A673 (cell line): ENCODE measurements at regions of chr2 and their contacts with region 1.

Region 1: GRCh38 chr2:194264586-194264985 is 1392.4 kb upstream of the SLC39A10 start:
- DNase-seq: no peak
- H3K4me3 ChIP-seq: no peak overlapping the region
- H3K27ac ChIP-seq: no peak overlapping the region
- H3K4me1 ChIP-seq: no peaks in the 10 kb centered on the region
- H3K27me3 ChIP-seq: no peaks in the 10 kb centered on the region
- CTCF ChIP-seq: no peak

Region 2: GRCh38 chr2:194289712-194290346 is 25.2 kb after region 1 on chr2:
- CTCF ChIA-PET with region 1: no interaction called
- POLR2A ChIA-PET with region 1: no interaction called
- intact Hi-C with region 1: loop called (anchors 2 kb)
- DNase-seq: no peak
- H3K4me3 ChIP-seq: no peak overlapping the region
- H3K27ac ChIP-seq: no peak overlapping the region
- H3K4me1 ChIP-seq: no peaks in the 10 kb centered on the region
- H3K27me3 ChIP-seq: no peaks in the 10 kb centered on the region
- CTCF ChIP-seq: no peak